ENCODE measurements at regions of chr1 and their contacts with region 1.

Region 1: GRCh38 chr1:180252638-180253536 is 22.8 kb downstream of the LHX4 start:
- DNase-seq: peak; percentile 30
- H3K4me3 ChIP-seq: no peak overlapping the region
- H3K27ac ChIP-seq: no peak overlapping the region
- H3K27me3 ChIP-seq: peaks cover 4% of the 10 kb centered on the region
- CTCF ChIP-seq: peak; percentile 91

Region 2: GRCh38 chr1:179996099-179996498 is 256.8 kb before region 1 on chr1:
- CTCF ChIA-PET with region 1: no interaction called
- POLR2A ChIA-PET with region 1: no interaction called
- DNase-seq: no peak
- H3K4me3 ChIP-seq: no peak overlapping the region
- H3K27ac ChIP-seq: no peak overlapping the region
- H3K27me3 ChIP-seq: no peaks in the 10 kb centered on the region
- CTCF ChIP-seq: no peak

Region 3: DNA sequence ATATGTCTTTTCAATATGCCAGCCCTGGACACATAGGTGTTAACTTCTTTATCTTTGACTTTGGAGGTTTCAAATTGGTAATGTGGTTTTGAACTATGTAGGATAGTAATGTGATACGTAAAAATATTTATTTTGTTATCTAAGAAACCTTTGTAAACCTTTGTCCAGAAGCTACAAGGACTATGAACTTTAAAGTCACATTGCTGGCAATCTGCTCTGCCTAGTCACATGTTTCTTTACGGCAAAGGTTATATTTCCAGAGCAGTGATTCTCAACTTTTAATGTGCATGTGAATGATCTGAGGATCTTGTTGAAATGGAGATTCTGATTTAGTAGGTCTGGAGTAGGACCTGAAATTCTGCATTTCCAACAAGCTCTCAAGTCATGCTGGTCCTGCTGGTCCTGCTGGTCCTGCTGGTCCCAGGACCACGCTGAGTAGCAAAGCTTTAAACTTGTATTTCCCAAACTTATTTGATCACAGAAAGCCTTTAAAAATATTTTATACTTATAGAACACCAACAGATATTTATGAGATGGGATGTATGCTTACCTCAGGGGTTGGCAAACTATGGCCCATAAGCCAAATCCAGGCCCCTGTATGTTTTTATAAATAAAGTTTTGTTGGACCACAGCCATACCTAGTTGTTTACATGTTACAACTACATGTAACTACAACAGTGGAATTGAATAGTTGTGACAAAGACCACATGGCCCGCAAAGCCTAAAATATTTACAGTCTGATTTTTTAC is 156.1 kb before region 1 on chr1:
- CTCF ChIA-PET with region 1: no interaction called
- POLR2A ChIA-PET with region 1: no interaction called
- DNase-seq: peak; percentile 24
- H3K4me3 ChIP-seq: no peak overlapping the region
- H3K27ac ChIP-seq: peak overlapping the region; percentile 33
- H3K27me3 ChIP-seq: no peaks in the 10 kb centered on the region
- CTCF ChIP-seq: no peak

Region 4: DNA sequence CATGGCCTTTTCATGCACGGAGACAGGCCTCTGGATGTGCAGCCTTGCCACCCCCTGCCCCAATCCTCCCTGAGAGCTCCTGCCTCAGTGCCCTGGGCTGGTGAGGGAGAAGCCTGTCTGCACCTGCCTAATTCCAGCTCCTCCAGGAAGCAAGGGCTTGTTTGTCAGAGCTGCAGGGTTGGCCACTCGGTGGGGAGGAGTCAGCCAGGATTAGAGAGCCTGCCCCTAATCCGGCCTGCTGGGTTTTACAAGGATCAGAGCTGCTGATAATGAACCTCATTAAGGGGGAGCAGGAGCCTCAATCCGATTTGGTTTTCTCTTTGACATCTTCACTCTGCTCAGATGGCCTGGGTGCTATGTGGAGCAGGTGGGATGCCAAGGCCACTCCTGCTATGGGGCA is 54.7 kb before region 1 on chr1:
- CTCF ChIA-PET with region 1: no interaction called
- POLR2A ChIA-PET with region 1: no interaction called
- DNase-seq: no peak
- H3K4me3 ChIP-seq: no peak overlapping the region
- H3K27ac ChIP-seq: no peak overlapping the region
- H3K27me3 ChIP-seq: no peaks in the 10 kb centered on the region
- CTCF ChIP-seq: no peak

Region 5: GRCh38 chr1:180241716-180242526 is 11.0 kb before region 1 on chr1:
- CTCF ChIA-PET with region 1: interaction called, 14 read pairs
- POLR2A ChIA-PET with region 1: no interaction called
- DNase-seq: no peak
- H3K4me3 ChIP-seq: no peak overlapping the region
- H3K27ac ChIP-seq: no peak overlapping the region
- H3K27me3 ChIP-seq: peaks cover 66% of the 10 kb centered on the region
- CTCF ChIP-seq: no peak

Region 6: DNA sequence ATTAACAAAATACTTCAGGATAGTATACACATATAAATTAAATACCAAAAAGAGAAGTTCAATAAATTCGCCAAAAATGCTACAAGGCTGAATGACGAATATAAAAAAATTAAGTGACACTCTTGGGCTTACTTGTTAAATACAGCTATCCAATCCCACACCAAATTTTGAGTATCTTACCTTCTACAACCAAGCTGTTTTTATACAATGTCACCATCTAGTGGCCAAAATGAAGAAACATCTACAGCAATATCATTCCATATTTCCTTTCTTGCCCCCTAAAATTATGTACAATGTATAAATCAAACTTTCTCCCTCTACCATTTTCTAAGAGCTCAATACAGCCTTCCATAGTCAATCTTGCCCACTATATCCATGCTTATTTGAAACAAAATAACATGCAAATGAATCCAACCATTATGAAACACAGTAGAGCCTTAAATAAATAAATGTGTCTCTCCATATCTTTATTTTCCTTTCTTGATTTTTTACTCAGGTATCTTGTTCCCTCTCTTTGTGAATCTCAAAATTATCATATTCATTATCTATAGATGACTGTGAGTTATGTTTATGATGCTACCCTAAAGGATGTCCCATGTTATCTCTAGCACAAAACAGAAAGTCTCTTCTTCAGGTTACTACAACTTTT is 163.2 kb after region 1 on chr1:
- CTCF ChIA-PET with region 1: interaction called, 34 read pairs
- POLR2A ChIA-PET with region 1: no interaction called
- DNase-seq: no peak
- H3K4me3 ChIP-seq: no peak overlapping the region
- H3K27ac ChIP-seq: no peak overlapping the region
- H3K27me3 ChIP-seq: no peaks in the 10 kb centered on the region
- CTCF ChIP-seq: peak; percentile 64